ENCODE measurements at regions of chr1 and their contacts with region 1.

Region 1: DNA sequence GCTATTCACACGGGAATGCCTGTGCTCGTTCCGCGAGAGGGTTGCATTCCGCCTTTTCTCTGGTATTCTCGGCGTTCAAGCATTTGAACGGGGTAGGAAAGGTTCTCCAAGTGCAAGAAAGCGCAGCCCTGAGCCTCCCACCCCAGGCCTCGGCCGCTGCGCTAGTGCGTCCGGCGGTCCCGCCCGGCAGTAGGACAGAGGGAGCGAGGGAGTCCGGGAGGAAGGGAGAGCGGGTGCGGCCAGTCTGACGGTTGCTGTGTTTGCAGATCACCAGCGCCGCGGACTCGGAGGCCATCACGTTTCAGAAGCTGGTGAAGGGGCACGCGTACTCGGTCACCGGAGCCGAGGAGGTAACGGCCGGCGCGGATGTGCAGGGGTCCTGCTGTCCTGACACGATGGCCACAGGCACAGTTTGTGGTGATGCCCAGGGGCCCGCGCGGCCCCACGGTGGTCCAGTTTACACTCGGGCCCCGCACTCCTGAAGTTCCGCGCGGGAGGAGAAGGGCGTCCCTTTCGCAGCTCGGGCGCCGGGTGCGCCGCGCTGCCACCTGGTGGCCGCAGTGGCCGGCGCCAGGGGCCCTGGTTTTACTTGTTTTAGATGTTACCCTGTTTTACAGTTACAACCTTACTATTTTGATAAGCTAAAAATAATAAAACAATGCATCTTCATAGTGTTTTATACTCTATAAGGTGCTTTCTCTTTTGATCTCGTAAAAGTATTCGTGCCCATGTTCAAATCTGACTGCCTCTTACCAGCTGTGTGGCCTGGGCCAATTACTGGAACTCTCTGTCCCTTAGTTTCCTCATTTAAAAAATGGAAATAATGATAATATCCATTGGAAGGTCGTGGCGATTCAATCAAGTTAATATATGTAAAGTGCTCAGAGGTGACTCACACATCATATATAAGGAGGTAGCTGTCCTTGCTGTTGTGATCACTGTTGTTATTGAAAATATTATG is 36.7 kb downstream of the CAPN2 start:
- DNase-seq: peak; percentile 86

Region 2: DNA sequence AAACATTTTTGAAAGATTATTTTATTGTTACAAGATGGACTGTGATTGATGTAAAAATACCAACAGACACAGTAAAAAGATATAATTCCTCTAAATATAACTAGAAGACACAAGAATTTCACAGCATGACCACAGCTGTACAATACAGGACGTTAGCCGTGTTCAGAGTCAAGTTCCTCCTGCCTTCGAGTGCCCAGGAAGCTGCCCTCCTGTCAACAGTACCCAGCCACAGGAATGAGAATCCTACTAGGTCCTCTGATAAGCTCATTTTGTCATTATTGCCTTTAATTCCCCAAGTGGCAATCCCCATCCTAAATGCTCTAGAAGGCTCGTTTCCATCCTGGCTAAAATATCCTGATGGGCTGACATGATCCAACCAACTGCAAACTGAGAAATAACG is 53.1 kb before region 1 on chr1:
- CTCF ChIA-PET with region 1: interaction called, 22 read pairs
- POLR2A ChIA-PET with region 1: interaction called, 3 read pairs
- DNase-seq: no peak

Region 3: DNA sequence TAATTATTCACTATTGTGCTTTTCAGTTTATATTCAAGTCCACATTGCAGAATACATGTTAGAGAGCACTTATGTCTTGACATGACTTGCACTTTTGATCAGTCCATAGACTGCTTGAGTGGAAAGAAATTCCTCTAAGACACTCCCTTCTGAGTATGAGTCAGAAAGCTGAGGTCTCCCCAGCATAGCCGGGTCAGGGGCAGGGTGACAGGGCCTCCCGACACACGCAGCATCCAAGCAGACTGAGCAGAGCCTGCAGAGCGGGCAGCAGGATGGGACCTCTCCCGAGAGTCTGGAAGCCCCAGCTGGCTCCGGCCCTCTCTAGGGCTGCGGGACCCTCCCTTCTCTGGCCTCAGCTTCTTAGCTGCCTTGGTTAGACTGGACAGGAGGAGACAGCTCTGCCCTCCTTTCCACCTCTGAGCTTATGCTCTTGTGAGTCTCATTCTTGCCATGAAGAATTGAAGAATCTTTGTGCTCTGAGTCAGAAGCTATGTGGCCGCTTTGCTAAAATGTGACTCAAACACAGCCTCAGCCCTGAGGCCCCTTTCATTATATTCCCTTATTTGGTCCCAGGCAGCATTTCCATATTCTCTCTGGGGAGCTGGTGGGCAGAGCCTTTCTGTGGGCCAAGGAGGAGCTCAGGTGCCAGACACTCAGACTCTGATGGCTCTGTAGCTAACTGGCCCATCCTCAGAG is 48.0 kb before region 1 on chr1:
- CTCF ChIA-PET with region 1: interaction called, 22 read pairs
- POLR2A ChIA-PET with region 1: interaction called, 3 read pairs
- DNase-seq: no peak

Region 4: DNA sequence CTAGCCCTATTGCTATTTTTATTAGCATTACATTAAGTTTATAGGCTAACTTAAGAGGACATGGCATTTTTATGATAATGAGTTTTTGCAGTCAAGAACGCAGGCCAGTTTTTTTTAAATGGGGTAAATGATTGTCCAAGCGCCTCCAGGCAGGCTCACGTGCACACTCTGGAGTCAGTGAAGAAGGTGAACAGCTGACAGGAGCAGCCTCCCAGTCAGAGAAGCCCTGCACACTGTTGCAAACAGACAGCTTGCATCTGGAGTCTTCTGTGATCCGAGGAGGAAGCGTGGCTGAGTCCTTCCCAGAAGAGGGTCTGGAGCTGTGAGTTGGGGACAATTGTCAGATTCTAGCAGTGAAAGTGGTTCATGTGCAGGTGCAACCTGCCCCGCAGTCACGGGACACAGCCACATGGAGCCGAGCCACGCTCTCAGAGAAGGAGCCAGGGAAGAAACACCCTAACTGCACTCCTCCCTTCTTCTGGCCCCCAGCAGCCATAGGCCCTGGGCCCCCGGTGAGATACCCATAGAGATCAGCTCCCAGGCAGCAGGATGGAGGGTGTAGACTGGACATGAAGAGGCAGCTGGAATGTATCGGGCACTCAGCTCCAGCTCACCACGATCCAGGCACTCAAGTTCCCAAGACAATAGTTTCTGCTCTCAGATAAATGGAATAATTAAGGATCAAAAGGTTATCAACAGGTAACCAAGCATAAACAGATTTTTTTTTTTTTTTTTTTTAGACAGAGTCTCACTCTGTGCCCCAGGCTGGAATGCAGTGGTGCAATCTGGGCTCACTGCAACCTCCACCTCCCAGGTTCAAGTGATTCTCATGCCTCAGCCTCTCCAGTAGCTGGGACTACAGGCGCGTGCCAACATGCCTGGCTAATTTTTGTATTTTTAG is 10.3 kb before region 1 on chr1:
- CTCF ChIA-PET with region 1: interaction called, 13 read pairs
- POLR2A ChIA-PET with region 1: interaction called, 3 read pairs
- DNase-seq: peak; percentile 51

Region 5: GRCh38 chr1:223771814-223772770 is 23.0 kb after region 1 on chr1:
- CTCF ChIA-PET with region 1: interaction called, 11 read pairs
- POLR2A ChIA-PET with region 1: no interaction called
- DNase-seq: no peak

Measured in HEK293T (cell line).